Right ventricle myocardium inferior (tissue), 1 donor: ENCODE measurements at regions of chr14 and their contacts with region 1.

Region 1: GRCh38 chr14:93619176-93619793 is 169.0 kb downstream of the PRIMA1 start:
- DNase-seq: no peak
- ATAC-seq: no peak

Region 2: GRCh38 chr14:93231129-93231979 is 387.9 kb before region 1 on chr14:
- intact Hi-C with region 1: loop called (anchors 10 kb)
- DNase-seq: no peak
- ATAC-seq: peak; percentile 45

Region 3: DNA sequence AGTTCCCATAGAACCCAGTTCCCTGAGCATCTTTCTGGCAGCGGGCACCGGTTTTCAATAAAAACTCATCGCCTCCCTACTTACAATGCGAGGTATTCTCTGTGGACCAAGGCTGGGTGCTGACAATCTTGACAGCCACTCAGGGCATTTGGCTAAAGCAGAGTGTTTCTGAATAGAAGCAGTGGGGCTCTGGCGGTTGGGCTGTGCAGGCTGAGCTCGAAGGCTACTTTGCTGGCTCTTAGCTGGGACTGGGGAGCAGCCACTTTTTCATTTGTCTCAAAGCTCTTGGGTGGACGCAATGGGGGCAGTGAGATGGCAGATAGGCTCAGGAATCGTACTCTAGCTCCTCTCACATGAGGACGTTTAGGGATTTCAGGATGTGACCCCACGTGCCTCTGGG is 36.8 kb before region 1 on chr14:
- intact Hi-C with region 1: no loop called
- DNase-seq: no peak
- ATAC-seq: peak; percentile 81